ENCODE measurements at regions of chr18 and their contacts with region 1.

Region 1: DNA sequence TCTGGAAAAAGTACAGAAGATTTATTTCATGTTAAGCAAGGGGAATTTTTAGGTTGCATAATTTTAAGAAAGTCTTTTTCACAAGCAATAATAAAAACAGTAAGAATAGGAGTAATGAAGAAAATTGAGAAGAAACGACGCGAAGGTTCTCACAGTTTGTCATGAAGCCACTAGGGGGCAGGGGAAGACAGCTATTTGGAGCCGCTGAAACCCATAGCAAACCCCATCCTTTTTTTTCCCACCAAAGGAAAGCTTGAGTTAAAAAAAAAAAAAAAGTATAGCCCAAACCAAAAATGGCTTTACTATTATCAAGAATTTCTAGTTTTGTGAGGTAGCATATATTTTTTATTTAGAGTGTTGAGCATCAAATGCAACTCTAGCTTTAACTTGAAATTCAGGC is 300.9 kb downstream of the PHLPP1 start:
- DNase-seq: peak; percentile 32
- ATAC-seq: peak; percentile 79
- H3K4me3 ChIP-seq: no peak overlapping the region
- H3K27ac ChIP-seq: no peak overlapping the region
- H3K4me1 ChIP-seq: no peaks in the 10 kb centered on the region
- H3K27me3 ChIP-seq: no peaks in the 10 kb centered on the region
- CTCF ChIP-seq: peak; percentile 73 to 87 (median 73)
- POLR2A ChIP-seq: no peak
- RAD21 ChIP-seq: peak; percentile 82

Region 2: GRCh38 chr18:63339920-63340484 is 323.7 kb after region 1 on chr18:
- CTCF ChIA-PET with region 1: interaction called, 5 read pairs
- POLR2A ChIA-PET with region 1: no interaction called
- RAD21 ChIA-PET with region 1: no interaction called
- intact Hi-C with region 1: loop called (anchors 5 kb)
- DNase-seq: peak; percentile 10
- ATAC-seq: peak; percentile 57; the same call in 1 of the 2 replicates
- H3K4me3 ChIP-seq: no peak overlapping the region
- H3K27ac ChIP-seq: no peak overlapping the region
- H3K4me1 ChIP-seq: peaks cover 10 to 15% of the 10 kb centered on the region in 2 experiments
- H3K27me3 ChIP-seq: no peaks in the 10 kb centered on the region
- CTCF ChIP-seq: peak; percentile 29 to 78 (median 68); a peak in 5 of 6 replicates
- POLR2A ChIP-seq: no peak
- RAD21 ChIP-seq: peak; percentile 41; the same call in 1 of the 2 replicates

Region 3: DNA sequence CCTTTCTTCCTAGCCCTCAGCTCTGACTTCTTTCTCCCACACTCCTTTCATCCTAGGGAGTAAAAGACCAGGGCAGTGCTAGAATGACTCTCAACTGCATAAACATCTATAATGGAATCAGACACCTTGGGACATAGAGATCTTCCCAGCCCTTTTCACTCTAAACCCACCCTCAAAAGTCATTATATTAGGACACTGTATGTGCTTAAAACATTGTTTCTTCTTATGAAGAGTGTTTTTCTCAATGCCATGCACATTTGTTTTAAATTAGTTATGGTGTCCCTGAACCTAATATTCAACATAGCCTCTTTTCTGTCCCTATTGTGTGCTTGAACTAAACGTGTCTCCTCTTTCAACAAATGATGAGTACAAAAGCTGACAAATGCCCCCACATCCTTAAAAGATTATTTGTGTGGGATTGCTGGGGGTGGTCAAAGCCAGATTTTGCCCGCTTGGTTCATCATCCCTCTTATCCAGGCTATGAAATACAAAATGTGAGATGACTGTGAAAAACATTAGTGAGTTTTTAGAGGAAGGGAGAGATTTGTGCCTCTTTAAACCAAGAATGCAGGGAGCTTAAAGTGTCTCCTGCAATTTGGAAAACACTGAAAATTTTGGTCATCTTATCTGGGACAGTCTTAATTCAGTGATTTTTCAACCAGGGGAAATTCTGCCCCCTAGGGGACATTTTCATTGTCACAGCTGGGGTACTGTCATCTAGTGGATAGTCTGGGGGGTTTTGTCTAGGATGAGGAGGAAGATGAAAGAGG is 489.5 kb after region 1 on chr18:
- CTCF ChIA-PET with region 1: interaction called, 12 read pairs
- POLR2A ChIA-PET with region 1: no interaction called
- RAD21 ChIA-PET with region 1: no interaction called
- intact Hi-C with region 1: loop called (anchors 5 kb)
- DNase-seq: peak; percentile 19
- ATAC-seq: peak; percentile 92
- H3K4me3 ChIP-seq: no peak overlapping the region
- H3K27ac ChIP-seq: no peak overlapping the region
- H3K4me1 ChIP-seq: no peaks in the 10 kb centered on the region
- H3K27me3 ChIP-seq: no peaks in the 10 kb centered on the region
- CTCF ChIP-seq: peak; percentile 72 to 84 (median 79)
- POLR2A ChIP-seq: no peak
- RAD21 ChIP-seq: peak; percentile 68

Region 4: DNA sequence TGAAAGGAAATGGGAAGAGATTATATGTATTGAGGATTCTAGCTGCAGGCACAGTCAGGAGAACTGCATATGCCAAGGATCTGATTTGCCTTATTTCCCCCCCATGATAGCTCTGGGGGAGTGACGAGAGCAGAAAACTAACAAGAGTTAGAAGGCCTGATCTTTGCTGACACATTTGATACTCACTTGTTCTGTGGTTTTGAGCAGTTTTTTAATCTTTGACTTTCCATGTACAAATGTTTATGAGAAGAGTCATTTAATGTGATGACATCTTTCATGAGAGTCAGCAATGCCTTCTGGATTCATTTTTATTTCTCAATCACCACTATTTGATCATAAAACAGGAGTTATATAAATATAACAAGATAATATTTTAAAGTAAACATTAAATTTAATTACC is 746.2 kb after region 1 on chr18:
- CTCF ChIA-PET with region 1: no interaction called
- POLR2A ChIA-PET with region 1: no interaction called
- RAD21 ChIA-PET with region 1: no interaction called
- intact Hi-C with region 1: no loop called
- DNase-seq: no peak
- ATAC-seq: no peak
- H3K4me3 ChIP-seq: no peak overlapping the region
- H3K27ac ChIP-seq: no peak overlapping the region
- H3K4me1 ChIP-seq: no peaks in the 10 kb centered on the region
- H3K27me3 ChIP-seq: no peaks in the 10 kb centered on the region
- CTCF ChIP-seq: no peak
- POLR2A ChIP-seq: no peak
- RAD21 ChIP-seq: no peak

Measured in HCT116 (cell line).